ENCODE measurements at regions of chr1 and their contacts with region 1.

Region 1: GRCh38 chr1:241847796-241848685 is at the start of gene EXO1:
- DNase-seq: no peak
- H3K4me3 ChIP-seq: peak within 1 kb of the TSS; percentile 77 to 96 (median 92)
- H3K27ac ChIP-seq: peak within 1 kb of the TSS; percentile 84
- H3K4me1 ChIP-seq: peaks cover 21% of the 10 kb centered on the region
- H3K27me3 ChIP-seq: no peaks in the 10 kb centered on the region
- CTCF ChIP-seq: peak; percentile 24 to 75 (median 39)
- polyA plus RNA-seq, gene EXO1: 0.84 to 6.5 TPM (median 5.4 TPM) in 3 replicates

Region 2: GRCh38 chr1:241611063-241611462 is 237.0 kb before region 1 on chr1:
- dilution Hi-C with region 1: loop called (anchors 25 kb)
- DNase-seq: peak; percentile 56
- H3K4me3 ChIP-seq: no peak overlapping the region
- H3K27ac ChIP-seq: peak overlapping the region; percentile 93
- H3K4me1 ChIP-seq: peaks cover 64% of the 10 kb centered on the region
- H3K27me3 ChIP-seq: no peaks in the 10 kb centered on the region
- CTCF ChIP-seq: peak in 2 of 3 experiments; percentile 38 to 52